WTC11 (cell line): ENCODE measurements at regions of chr18 and their contacts with region 1.

Region 1: GRCh38 chr18:58117786-58118403 is 73.9 kb downstream of the NEDD4L start:
- DNase-seq: no peak
- ATAC-seq: no peak
- H3K4me3 Mint-ChIP-seq: no peak overlapping the region
- H3K27ac Mint-ChIP-seq: peak overlapping the region; percentile 41; the same call in 1 of the 2 replicates
- H3K4me1 Mint-ChIP-seq: peaks cover 61% of the 10 kb centered on the region
- H3K27me3 Mint-ChIP-seq: no peaks in the 10 kb centered on the region
- CTCF ChIP-seq: no peak

Region 2: GRCh38 chr18:57029761-57030160 is 1088.1 kb before region 1 on chr18:
- CTCF ChIA-PET with region 1: no interaction called
- POLR2A ChIA-PET with region 1: no interaction called
- DNase-seq: no peak
- ATAC-seq: peak; percentile 98
- H3K4me3 Mint-ChIP-seq: no peak overlapping the region
- H3K27ac Mint-ChIP-seq: no peak overlapping the region
- H3K4me1 Mint-ChIP-seq: peaks cover 27% of the 10 kb centered on the region
- H3K27me3 Mint-ChIP-seq: no peaks in the 10 kb centered on the region
- CTCF ChIP-seq: no peak

Region 3: DNA sequence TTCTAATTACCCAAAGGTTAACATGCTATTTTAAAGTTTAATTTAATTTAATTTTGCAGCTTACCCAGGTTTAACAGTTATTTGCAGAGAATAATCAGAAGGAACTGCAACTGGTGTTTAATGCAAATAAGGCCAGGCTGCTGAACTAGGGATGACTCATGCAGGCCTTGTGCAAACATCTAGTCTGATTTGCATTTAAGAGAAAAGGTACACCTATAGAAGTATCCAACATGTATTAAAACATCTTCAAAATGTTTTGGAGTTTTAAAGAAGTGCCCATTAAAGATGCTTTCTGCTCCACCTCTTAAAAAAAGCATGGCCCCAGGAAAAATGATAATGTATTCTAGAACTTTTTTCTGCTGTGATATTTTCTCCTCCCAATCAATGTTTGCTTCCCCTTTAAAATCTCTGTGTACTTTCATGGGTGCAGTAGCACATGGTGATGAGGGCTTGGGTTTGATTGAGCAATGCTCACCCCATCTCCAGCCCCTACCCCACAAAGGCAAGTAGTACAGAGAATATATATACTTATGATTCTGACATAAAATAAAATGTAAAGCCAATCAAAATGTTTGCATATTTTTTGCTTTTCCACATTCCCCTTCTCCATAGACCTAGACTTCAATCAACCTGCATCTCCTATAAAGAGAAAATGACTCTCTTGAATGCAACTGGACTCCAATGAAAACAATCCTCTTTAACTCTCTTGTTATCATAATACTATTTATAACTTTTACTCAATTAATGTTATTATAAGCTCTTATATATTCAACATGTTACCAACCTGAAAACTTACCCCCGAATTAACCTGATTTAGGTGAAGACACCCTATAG is 368.9 kb before region 1 on chr18:
- CTCF ChIA-PET with region 1: no interaction called
- POLR2A ChIA-PET with region 1: no interaction called
- DNase-seq: no peak
- ATAC-seq: peak; percentile 59
- H3K4me3 Mint-ChIP-seq: no peak overlapping the region
- H3K27ac Mint-ChIP-seq: peak overlapping the region; percentile 55; the same call in 1 of the 2 replicates
- H3K4me1 Mint-ChIP-seq: peaks cover 28% of the 10 kb centered on the region
- H3K27me3 Mint-ChIP-seq: no peaks in the 10 kb centered on the region
- CTCF ChIP-seq: no peak

Region 4: GRCh38 chr18:57959278-57959677 is 158.6 kb before region 1 on chr18:
- CTCF ChIA-PET with region 1: interaction called, 46 read pairs
- POLR2A ChIA-PET with region 1: no interaction called
- DNase-seq: no peak
- ATAC-seq: peak; percentile 90
- H3K4me3 Mint-ChIP-seq: no peak overlapping the region
- H3K27ac Mint-ChIP-seq: no peak overlapping the region
- H3K4me1 Mint-ChIP-seq: peaks cover 5% of the 10 kb centered on the region
- H3K27me3 Mint-ChIP-seq: no peaks in the 10 kb centered on the region
- CTCF ChIP-seq: no peak

Region 5: GRCh38 chr18:58051765-58052460 is 66.0 kb before region 1 on chr18:
- CTCF ChIA-PET with region 1: interaction called, 54 read pairs
- POLR2A ChIA-PET with region 1: interaction called, 3 read pairs
- DNase-seq: no peak
- ATAC-seq: no peak
- H3K4me3 Mint-ChIP-seq: no peak overlapping the region
- H3K27ac Mint-ChIP-seq: 0 out of 2 replicates have a peak overlapping the region, but pooled peaks have one; percentile 7
- H3K4me1 Mint-ChIP-seq: peaks cover 54% of the 10 kb centered on the region
- H3K27me3 Mint-ChIP-seq: no peaks in the 10 kb centered on the region
- CTCF ChIP-seq: no peak

Region 6: GRCh38 chr18:58101291-58101794 is 16.6 kb before region 1 on chr18:
- CTCF ChIA-PET with region 1: interaction called, 15 read pairs
- POLR2A ChIA-PET with region 1: no interaction called
- DNase-seq: no peak
- ATAC-seq: no peak
- H3K4me3 Mint-ChIP-seq: no peak overlapping the region; the same call in 1 of the 2 replicates
- H3K27ac Mint-ChIP-seq: peak overlapping the region; percentile 79
- H3K4me1 Mint-ChIP-seq: peaks cover 83% of the 10 kb centered on the region
- H3K27me3 Mint-ChIP-seq: no peaks in the 10 kb centered on the region
- CTCF ChIP-seq: no peak

Region 7: GRCh38 chr18:58493516-58494253 is 375.8 kb after region 1 on chr18:
- CTCF ChIA-PET with region 1: no interaction called
- POLR2A ChIA-PET with region 1: no interaction called
- DNase-seq: peak; percentile 79
- ATAC-seq: peak; percentile 84
- H3K4me3 Mint-ChIP-seq: no peak overlapping the region
- H3K27ac Mint-ChIP-seq: no peak overlapping the region
- H3K4me1 Mint-ChIP-seq: peaks cover 34% of the 10 kb centered on the region
- H3K27me3 Mint-ChIP-seq: no peaks in the 10 kb centered on the region; the same call in none of the 2 replicates
- CTCF ChIP-seq: peak; percentile 78